ENCODE measurements at regions of chr20 and their contacts with region 1.

Region 1: DNA sequence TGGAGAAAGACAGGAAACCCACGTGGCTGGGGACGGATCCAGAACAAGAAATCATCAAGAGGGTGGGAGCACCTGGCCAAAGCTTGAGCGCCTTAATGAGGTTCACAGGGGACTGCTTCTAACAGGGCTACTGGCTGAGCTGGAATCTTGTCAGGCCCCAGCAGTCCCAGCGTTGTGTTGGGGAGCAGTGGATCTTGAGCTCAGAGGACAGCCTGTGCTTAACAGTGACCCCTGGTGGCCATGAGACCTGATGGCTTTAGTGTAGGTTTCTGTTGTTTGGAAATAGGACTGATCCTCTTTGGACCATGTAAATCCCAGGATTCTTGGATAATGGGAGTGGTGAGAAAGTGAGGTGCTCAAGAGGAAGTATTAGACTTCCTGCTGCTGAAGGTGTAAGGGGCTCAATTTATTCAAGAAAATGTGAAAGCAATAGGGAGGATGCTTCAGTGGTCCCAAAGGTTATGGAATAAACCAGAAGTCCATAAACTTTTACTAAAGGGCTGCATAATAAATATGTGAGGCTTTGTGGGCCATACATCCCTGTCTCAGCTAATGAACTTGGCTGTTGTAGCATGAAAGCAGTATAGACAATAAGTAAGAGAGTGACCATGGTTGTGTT is 216.2 kb downstream of the NFATC2 start:
- DNase-seq: no peak
- ATAC-seq: no peak
- H3K4me3 ChIP-seq: no peak overlapping the region
- H3K27ac ChIP-seq: peak overlapping the region; percentile 88
- H3K4me1 ChIP-seq: peaks cover 17% of the 10 kb centered on the region
- H3K27me3 ChIP-seq: no peaks in the 10 kb centered on the region
- CTCF ChIP-seq: peak; percentile 77

Region 2: DNA sequence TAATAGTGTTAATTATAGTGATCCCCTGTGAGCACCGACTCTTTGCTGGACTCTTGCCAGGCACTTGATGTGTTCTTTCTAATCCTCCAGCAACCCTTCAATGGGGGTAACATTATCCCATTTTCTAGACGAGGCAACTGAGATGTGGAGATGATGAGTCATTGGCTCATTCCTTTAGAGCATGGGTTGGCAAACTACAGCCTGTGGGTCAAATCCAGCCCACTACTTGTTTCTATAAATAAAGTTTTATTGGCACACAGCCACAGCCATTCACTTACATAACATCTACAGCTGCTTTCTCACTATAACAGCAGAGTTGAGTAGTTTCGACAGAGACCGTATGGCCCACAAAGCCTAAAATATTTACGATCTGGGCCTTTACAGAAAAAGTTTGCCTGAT is 53.9 kb before region 1 on chr20:
- CTCF ChIA-PET with region 1: no interaction called
- POLR2A ChIA-PET with region 1: no interaction called
- intact Hi-C with region 1: no loop called
- DNase-seq: no peak
- ATAC-seq: no peak
- H3K4me3 ChIP-seq: no peak overlapping the region
- H3K27ac ChIP-seq: no peak overlapping the region
- H3K4me1 ChIP-seq: no peaks in the 10 kb centered on the region
- H3K27me3 ChIP-seq: peaks cover 17% of the 10 kb centered on the region
- CTCF ChIP-seq: no peak

Region 3: DNA sequence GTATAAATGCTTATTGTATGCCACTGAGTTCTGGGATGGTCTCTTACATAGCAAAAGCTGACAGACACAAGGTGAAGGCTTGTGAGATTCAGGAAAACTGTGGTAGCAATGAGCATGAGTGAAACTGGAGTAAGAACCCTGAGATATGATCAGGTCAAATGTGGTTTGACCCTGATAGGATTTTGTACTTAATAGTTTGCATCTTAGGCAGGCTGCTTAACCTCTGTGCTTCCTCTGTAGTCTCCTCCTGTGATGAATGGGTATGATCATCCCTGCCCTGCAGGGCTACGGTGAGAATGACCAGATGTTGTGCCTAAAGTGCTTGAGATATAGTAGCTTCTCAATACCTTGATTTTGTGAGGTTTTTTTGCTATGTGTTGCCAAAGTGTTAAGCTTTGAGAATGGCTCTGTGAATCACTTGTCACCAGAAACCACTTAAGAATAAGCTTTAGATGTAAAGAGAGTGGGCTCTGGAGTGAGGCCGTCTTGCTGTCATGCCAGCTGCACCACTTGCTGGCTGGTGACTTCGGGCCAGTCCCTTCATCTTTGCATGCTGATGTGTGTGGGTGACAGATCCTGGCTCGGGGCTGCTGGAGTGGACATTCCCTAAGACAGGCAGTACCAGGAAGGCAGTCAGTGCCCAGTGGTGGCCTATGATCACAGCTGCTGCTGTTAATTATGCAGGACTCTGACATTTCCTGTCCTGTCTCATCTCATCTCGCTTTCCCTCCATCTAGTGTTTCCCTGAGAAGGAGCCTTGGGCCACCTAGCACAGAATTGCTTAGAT is 38.5 kb before region 1 on chr20:
- CTCF ChIA-PET with region 1: no interaction called
- POLR2A ChIA-PET with region 1: no interaction called
- intact Hi-C with region 1: no loop called
- DNase-seq: no peak
- ATAC-seq: no peak
- H3K4me3 ChIP-seq: no peak overlapping the region
- H3K27ac ChIP-seq: no peak overlapping the region
- H3K4me1 ChIP-seq: 0 out of 2 replicates have a peak, but pooled peaks cover 5% of the 10 kb centered on the region
- H3K27me3 ChIP-seq: peaks cover 5% of the 10 kb centered on the region; the same call in 1 of the 2 replicates
- CTCF ChIP-seq: no peak

Region 4: GRCh38 chr20:51350941-51351631 is 24.8 kb after region 1 on chr20:
- CTCF ChIA-PET with region 1: interaction called, 3 read pairs
- POLR2A ChIA-PET with region 1: interaction called, 4 read pairs
- intact Hi-C with region 1: loop called (anchors 1 kb)
- DNase-seq: peak; percentile 97
- ATAC-seq: peak; percentile 71
- H3K4me3 ChIP-seq: peak overlapping the region; percentile 41
- H3K27ac ChIP-seq: peak overlapping the region; percentile 92
- H3K4me1 ChIP-seq: peaks cover 65% of the 10 kb centered on the region
- H3K27me3 ChIP-seq: no peaks in the 10 kb centered on the region
- CTCF ChIP-seq: no peak

Measured in PC-3 (cell line).